Activated T-helper 1 cell treated with anti-CD3 and anti-CD28 coated beads, Interleukin-12 subunit alpha, Interleukin-12 subunit beta, Interleukin-2, Interleukin-4 antibody, amounts not matched to agents 30 ng/mL and 10 ng/mL and 1 ng/mL, durations not matched to agents 14 hours and 24 hours and 36 hours (primary cell): ENCODE measurements at regions of chr15 and their contacts with region 1.

Region 1: DNA sequence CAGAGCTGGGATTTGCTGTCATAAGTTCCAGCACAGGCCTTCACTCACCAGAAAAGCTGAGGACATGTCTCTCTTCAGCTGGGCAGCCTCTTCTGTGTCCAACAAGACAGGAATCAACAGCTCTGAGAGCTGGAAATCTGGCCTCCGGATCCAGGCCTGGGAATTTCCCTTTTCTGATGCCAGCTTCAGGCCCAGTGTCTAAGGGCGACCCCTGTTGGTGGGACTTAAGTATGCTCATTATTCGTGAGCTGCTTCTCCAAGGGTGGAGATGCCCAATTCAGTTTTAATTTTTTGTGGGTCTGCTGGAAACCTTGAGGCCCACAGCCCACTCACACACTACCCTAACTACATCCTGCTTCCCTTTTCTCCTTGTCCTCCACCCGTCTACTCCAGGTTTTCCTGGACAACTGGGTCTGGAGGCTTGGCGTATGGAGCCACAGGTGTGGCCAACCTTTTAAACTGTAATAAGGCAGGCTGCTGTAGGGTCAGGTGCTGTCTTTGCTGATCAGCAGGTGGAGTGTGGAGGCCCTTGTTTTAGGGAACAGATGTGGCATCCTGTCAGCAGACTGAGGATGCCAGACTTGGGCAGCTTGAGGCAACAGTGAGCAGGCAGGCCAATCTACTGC is 2.6 kb upstream of the CEMIP start:
- DNase-seq: peak; percentile 51
- H3K4me3 Mint-ChIP-seq: no peak overlapping the region
- H3K27ac Mint-ChIP-seq: no peak overlapping the region
- H3K4me1 Mint-ChIP-seq: peaks cover 9% of the 10 kb centered on the region
- H3K27me3 Mint-ChIP-seq: peaks cover 42% of the 10 kb centered on the region

Region 2: DNA sequence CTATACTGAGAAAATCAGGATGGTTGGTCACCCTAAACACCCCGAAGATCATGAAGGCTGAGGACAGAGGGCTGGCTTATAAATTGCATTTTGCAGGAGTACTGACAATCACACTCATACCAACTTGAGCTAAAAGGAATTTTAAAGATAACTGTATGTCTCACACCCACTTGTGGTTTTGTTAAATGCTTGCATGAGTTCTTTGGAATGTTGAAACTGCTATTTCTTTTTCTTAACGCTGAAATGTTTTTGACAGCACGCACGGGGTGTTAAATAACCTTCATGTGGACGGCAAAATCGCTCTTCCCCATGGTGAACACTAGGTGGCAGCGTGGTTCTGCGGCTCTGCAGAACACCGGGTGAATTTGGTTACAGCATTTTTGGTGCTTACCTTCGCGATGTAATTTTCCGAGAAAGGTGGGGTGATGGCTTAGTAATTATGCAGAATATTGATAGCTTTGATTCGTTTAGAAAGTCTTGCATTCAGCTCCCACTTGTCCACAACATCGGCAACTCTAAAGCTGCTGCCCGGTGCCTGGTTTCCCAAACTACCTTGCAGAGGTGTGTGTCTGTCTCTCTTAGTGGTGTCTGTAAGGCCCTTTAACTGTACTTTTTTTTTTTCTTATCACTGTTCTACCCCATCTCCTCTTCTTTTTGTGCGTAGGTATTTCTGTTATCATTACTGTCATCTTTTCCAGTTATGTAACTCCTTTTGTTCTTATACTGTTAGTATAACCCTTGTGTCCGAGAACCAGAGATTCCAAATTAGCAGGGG is 320.7 kb before region 1 on chr15:
- intact Hi-C with region 1: loop called (anchors 1 kb)
- DNase-seq: peak; percentile 25
- H3K4me3 Mint-ChIP-seq: no peak overlapping the region
- H3K27ac Mint-ChIP-seq: no peak overlapping the region
- H3K4me1 Mint-ChIP-seq: peaks cover 4% of the 10 kb centered on the region
- H3K27me3 Mint-ChIP-seq: peaks cover 7% of the 10 kb centered on the region

Region 3: DNA sequence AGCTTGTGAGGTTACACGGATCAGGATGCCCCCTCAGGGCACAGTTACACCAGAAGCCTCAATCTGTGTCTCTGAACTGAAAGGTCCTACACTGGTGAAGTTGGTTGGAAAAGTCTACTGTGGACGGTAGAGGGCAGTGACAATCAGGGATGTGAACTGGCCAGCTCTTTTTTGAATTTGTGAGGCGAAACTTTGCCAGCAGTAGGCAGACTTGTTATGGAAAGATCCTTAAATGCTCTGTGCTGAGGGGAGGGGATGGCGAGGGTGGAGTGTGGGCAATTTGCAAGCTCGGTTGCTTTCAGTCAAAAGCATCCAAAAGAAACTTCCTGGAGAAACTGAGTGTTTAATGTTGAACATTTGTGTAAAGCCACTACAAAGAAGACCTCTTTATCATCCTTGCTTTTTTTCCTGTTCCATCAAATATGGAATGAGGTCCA is 208.8 kb before region 1 on chr15:
- intact Hi-C with region 1: loop called (anchors 1 kb)
- DNase-seq: no peak
- H3K4me3 Mint-ChIP-seq: no peak overlapping the region
- H3K27ac Mint-ChIP-seq: no peak overlapping the region
- H3K4me1 Mint-ChIP-seq: no peaks in the 10 kb centered on the region
- H3K27me3 Mint-ChIP-seq: peaks cover 9% of the 10 kb centered on the region

Region 4: DNA sequence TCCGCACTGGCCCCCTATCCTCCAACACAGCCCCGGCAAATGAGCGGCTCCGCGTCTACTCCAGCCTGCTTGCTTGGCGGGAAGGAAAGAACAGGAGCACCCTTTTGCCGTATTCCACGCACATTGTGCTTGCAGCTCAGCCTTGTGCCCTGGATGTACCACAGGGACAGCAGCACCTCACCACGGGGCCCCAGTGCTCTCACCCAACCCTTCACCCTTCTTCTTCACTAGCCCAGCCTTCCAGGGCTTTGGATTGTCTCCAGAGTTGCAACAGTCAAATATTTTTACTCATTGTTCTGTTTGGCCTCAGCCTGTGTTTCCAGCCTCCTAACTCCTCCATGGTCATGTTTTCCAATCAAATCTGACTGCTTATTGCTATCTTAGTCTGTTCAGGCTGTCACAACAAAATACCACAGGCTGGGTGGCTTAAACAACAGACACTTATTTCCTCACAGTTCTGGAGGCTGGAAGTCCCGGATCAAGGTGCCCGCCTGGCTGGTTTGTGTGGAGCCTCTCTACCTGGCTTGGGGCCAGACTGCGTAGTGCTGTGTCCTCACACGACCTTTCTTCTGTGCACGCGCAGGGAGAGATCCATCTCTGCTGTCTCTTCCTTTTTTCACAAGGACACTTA is 160.7 kb before region 1 on chr15:
- intact Hi-C with region 1: loop called (anchors 5 kb)
- DNase-seq: no peak
- H3K4me3 Mint-ChIP-seq: no peak overlapping the region
- H3K27ac Mint-ChIP-seq: no peak overlapping the region
- H3K4me1 Mint-ChIP-seq: no peaks in the 10 kb centered on the region
- H3K27me3 Mint-ChIP-seq: peaks cover 8% of the 10 kb centered on the region

Region 5: DNA sequence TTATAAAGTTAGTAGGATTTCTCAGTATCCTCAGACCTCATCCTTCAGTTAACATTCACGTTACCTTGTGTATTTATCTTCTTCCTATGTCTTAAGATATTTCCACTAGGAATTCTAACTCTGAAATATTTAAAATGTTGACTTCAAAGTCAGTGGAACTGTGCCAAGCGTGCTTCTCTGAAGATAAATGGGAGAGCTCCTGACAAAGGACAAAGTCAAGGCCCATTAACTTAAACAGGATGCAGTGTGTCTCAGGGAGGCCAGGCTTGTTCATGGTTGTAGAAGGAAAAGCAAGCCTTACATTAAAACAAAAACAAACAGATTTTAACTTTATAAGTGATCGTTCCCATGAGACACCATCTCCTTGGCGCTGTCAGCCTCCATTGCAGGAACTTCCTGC is 40.0 kb before region 1 on chr15:
- intact Hi-C with region 1: no loop called
- DNase-seq: no peak
- H3K4me3 Mint-ChIP-seq: no peak overlapping the region
- H3K27ac Mint-ChIP-seq: no peak overlapping the region
- H3K4me1 Mint-ChIP-seq: no peaks in the 10 kb centered on the region
- H3K27me3 Mint-ChIP-seq: no peaks in the 10 kb centered on the region

Region 6: DNA sequence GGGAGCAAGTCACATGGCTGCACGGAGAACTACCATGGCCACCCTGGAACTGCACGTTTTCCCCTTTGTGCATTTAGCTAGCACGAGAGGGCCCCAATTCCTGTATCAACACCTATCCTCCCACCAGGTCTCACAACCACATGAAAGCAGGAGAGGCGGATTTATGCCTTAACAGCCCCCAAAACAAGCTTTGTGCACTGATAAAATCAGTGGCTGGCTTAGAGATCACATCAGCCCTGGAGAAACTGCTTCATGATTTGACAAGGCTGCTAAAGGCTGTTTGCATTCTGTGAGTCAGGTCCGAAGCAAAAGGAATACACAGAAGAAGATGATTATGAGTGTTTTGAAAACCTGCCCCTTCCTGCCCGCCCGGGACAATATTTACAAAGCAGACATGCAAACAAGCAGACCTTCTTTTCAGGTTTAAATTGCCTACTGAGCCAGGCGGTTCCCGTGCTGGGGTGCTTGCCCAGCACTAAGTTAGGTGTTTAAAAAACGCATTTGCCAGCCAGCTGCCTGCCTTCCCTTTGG is 28.5 kb after region 1 on chr15:
- intact Hi-C with region 1: loop called (anchors 2 kb)
- DNase-seq: no peak
- H3K4me3 Mint-ChIP-seq: no peak overlapping the region
- H3K27ac Mint-ChIP-seq: no peak overlapping the region
- H3K4me1 Mint-ChIP-seq: peaks cover 20% of the 10 kb centered on the region
- H3K27me3 Mint-ChIP-seq: no peaks in the 10 kb centered on the region

Region 7: GRCh38 chr15:80856809-80857377 is 80.4 kb after region 1 on chr15:
- intact Hi-C with region 1: loop called (anchors 10 kb)
- DNase-seq: no peak
- H3K4me3 Mint-ChIP-seq: no peak overlapping the region
- H3K27ac Mint-ChIP-seq: no peak overlapping the region
- H3K4me1 Mint-ChIP-seq: no peaks in the 10 kb centered on the region
- H3K27me3 Mint-ChIP-seq: peaks cover 5% of the 10 kb centered on the region

Region 8: DNA sequence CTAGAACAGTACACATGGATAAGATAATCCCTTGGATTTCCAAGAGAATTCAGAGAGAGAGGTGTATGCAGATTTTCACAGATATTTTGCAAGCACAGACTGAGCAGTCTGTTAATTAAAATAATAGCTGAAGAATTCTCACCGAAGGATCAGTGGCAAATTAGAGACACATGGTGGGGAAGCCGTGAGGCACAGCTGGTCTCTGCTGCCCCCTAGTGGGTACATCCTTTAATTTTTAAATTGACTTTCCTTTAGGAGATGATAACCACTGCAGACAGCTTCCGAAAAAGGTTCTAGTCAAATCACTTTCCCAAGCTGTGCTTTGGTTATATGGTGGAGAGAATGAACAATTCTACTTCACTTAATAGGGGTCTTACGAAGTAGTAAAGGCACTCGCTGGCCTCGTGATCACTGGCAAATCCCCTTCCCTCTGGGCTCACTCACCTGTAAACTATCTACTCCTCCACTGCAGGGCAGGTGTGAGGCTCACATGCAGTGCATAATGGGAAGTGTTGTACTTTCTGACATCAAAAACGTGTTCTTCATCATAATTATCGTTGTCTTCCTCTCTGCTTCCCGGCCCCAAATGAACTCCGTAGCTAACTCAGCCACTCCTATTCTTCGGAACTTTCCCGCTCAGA is 193.6 kb after region 1 on chr15:
- intact Hi-C with region 1: loop called (anchors 1 kb)
- DNase-seq: peak; percentile 28
- H3K4me3 Mint-ChIP-seq: no peak overlapping the region
- H3K27ac Mint-ChIP-seq: no peak overlapping the region
- H3K4me1 Mint-ChIP-seq: no peaks in the 10 kb centered on the region
- H3K27me3 Mint-ChIP-seq: no peaks in the 10 kb centered on the region

Region 9: GRCh38 chr15:81373775-81374395 is 597.4 kb after region 1 on chr15 and contains the start of gene TMC3:
- intact Hi-C with region 1: no loop called
- DNase-seq: no peak
- H3K4me3 Mint-ChIP-seq: no peak within 1 kb of the TSS
- H3K27ac Mint-ChIP-seq: no peak within 1 kb of the TSS
- H3K4me1 Mint-ChIP-seq: no peaks in the 10 kb centered on the region
- H3K27me3 Mint-ChIP-seq: peaks cover 9% of the 10 kb centered on the region
- total RNA-seq, gene TMC3: not detected in 2 replicates